Ovary (tissue), 10 donors: ENCODE measurements at regions of chr18 and their contacts with region 1.

Region 1: DNA sequence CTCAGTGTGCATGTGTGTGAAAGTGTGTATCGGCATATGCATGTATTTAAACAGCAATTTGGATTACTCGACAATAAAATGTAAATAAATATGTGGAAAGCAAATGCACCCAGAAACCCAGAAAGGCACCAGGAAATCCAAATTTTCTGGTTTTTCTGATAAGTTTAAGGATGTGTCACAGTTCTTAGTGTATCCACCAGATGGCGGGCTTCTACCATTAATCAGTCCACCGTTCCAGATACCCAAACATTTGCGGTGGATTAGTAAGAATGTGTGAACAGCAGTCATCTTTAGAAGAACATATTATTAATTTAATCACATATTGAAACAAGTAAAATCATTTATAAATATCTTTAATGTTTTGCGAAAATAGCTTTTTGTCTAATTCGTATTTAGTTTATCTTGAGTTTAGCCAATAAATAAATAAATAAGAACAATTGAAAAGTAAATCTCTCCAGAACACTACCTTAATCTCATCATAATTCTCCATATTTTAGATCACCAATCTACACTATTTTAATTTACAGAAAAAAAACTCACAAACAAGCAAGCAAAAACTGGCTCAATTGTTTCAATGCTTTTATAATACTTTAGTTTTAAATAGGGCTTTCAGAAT is 298.9 kb downstream of the DSEL start:
- DNase-seq: peak in 4 of 5 donors; percentile 9 to 59 (median 38)
- H3K4me3 ChIP-seq: no peak overlapping the region
- H3K27ac ChIP-seq: no peak overlapping the region
- H3K4me1 ChIP-seq: no peaks in the 10 kb centered on the region
- H3K27me3 ChIP-seq: no peaks in the 10 kb centered on the region
- CTCF ChIP-seq: peak; percentile 42 to 76 (median 64)
- EP300 ChIP-seq: no peak
- POLR2A ChIP-seq: no peak

Region 2: DNA sequence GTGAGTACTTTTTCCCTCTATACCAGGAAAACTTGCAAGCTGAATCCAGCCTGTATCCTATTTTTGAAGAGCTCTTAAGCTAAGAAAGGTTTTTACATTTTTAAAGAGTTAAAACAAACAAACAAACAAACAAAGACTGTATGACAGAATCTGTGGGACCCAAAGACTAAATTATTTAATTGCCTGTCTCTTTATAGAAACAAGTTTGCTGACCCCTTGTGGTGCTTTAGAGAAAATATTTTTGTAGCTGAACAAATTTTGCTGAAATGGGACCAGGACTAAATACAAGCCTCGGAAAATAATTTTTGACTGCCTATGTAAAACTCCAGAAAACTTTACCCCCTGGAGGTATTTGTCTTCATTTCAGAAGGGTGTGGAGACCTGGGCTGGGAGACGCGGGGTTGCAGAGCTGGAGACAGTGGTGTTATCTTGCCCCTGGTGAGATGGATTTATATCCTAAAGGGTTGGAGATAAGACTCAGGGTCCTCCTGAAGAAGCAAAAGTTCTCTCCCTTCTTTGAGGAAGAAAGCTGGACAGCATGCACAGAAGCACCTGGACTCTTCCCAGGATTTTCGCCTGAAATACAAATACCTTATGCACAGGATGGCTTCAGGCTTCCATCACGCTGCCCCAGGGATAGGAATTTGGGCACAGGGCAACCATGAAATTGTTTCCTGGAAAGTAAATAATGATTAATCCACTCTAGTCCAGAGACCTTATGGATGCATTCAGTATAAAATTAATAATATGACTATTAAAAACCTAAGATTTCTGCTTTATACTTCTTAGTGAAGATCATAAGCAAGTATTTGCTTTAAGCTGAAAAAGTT is 1442.9 kb after region 1 on chr18:
- intact Hi-C with region 1: loop called in 2 of 4 experiments (anchors 5 to 10 kb)
- DNase-seq: no peak
- H3K4me3 ChIP-seq: no peak overlapping the region
- H3K27ac ChIP-seq: no peak overlapping the region
- H3K4me1 ChIP-seq: no peaks in the 10 kb centered on the region
- H3K27me3 ChIP-seq: no peaks in the 10 kb centered on the region
- CTCF ChIP-seq: peak in 1 of 3 donors; percentile 27
- EP300 ChIP-seq: no peak
- POLR2A ChIP-seq: no peak

Region 3: GRCh38 chr18:68735483-68736343 is 1518.1 kb after region 1 on chr18:
- intact Hi-C with region 1: loop called in 1 of 4 experiments (anchors 10 kb)
- DNase-seq: no peak
- H3K4me3 ChIP-seq: no peak overlapping the region
- H3K27ac ChIP-seq: no peak overlapping the region
- H3K4me1 ChIP-seq: peaks cover 1% of the 10 kb centered on the region
- H3K27me3 ChIP-seq: no peaks in the 10 kb centered on the region
- CTCF ChIP-seq: peak; percentile 34 to 60 (median 49)
- EP300 ChIP-seq: no peak
- POLR2A ChIP-seq: no peak